ENCODE measurements at regions of chr4 and their contacts with region 1.

Region 1: DNA sequence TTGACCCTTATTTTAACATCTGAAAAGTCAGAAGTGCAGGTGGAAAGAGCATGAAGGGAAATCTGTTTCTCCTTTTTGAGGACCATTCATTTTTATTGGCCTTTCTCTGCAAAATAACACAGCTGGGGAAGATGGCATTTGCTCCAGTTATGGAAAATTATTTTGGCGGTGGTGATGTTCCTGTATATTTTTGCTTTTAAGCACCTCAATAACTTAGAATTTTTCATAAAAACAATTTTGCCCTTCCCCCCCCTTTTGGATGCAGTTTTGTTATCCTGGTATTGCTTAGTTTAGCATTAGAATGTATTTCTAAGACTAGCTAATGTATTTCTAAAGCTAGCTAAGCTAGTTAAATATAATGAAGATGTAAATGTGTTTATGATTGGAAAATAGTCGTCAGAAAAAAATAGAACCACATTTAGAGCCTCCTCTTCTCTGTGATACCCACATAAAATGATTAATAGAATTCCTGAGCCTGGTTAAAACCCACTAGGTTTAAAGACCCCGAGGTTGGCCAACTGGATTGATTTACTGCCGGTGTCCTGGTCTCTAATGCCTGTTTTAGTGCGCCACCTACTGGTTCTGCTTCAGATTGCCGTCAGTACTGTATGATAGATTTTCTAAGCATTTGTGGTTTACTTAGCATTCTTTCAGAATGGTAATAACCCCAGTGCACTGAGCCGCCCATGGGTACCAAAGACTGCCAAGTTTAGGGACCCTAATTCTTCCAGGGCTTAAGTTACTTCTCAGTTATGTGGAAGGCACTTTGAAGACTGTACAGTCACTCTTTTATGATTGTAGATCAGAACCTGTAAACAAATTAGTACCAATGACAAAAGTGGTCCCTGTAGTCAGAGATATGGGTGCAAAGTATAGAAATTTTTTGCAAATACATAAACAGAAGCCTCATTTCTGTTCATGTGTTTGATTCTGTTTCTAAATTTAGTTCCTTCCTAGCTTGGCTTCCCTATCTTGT is 11.4 kb downstream of the KLF3 start:
- DNase-seq: peak in 1 of 2 donors; percentile 85
- ATAC-seq: peak in 7 of 8 donors; percentile 29 to 64 (median 49)
- H3K4me3 ChIP-seq: peak overlapping the region in 2 of 10 donors; percentile 16 to 21
- H3K27ac ChIP-seq: peak overlapping the region in 9 of 10 donors; percentile 78 to 100 (median 99)
- H3K4me1 ChIP-seq: peaks cover 27 to 93% (median 83%) of the 10 kb centered on the region in 9 donors
- H3K27me3 ChIP-seq: no peaks in the 10 kb centered on the region
- CTCF ChIP-seq: peak; percentile 83 to 96 (median 92)

Region 2: DNA sequence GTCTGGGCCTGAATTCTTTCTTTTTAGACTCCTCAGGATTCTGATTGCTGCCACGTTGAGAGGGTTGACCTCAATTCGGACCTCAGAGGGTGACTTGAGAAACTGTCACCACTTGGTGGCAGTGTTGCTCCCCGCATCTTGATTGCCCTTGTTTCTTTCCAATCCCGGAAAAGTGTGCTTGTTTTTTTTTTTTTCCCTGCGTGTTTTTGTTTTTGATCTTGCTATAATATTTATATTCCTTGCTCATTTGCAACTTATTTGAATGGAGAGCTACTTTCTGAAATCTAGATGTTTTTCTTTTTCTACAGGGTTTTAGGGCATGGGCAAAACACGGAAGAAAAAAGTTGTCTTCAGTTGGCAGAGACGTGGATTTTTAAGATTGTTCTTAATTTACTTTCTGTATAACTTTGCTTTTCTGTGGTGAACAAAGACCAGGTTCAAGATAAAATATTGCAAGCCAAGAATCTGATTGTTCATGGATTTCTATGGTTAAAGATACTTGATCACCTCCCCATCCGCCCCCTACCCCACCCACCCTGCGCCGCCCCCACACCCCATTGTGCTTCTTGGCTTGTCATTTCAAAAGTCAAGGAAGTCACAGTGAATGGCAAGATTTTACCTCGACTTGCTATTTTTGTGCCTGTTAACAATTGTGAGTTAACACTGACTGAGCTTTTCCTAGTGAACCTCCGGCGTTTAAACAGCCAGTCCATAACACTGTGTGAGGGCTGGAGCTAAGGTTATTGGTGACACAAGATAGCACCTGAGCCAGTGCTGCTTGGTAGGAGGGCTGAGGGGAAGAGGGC is 613.1 kb before region 1 on chr4:
- intact Hi-C with region 1: loop called in 8 of 10 experiments (anchors 2 to 10 kb)
- DNase-seq: peak; percentile 74 to 87
- ATAC-seq: peak; percentile 52 to 89 (median 79)
- H3K4me3 ChIP-seq: peak overlapping the region in 8 of 10 donors; percentile 21 to 54 (median 42)
- H3K27ac ChIP-seq: peak overlapping the region in 9 of 10 donors; percentile 18 to 81 (median 75)
- H3K4me1 ChIP-seq: peaks cover 0 to 46% (median 26%) of the 10 kb centered on the region in 9 donors
- H3K27me3 ChIP-seq: no peaks in the 10 kb centered on the region
- CTCF ChIP-seq: peak; percentile 74 to 95 (median 87)

Region 3: GRCh38 chr4:38179690-38180377 is 495.6 kb before region 1 on chr4:
- intact Hi-C with region 1: loop called (anchors 1 to 5 kb)
- DNase-seq: peak; percentile 49 to 71
- ATAC-seq: peak; percentile 32 to 76 (median 61)
- H3K4me3 ChIP-seq: no peak overlapping the region
- H3K27ac ChIP-seq: peak overlapping the region in 1 of 10 donors; percentile 1
- H3K4me1 ChIP-seq: peaks cover 2 to 53% (median 21%) of the 10 kb centered on the region in 9 donors
- H3K27me3 ChIP-seq: no peaks in the 10 kb centered on the region
- CTCF ChIP-seq: peak; percentile 89 to 97 (median 94)

Region 4: GRCh38 chr4:38366456-38366855 is 309.0 kb before region 1 on chr4:
- intact Hi-C with region 1: loop called in 1 of 10 experiments (anchors 5 kb)
- DNase-seq: peak; percentile 18 to 19
- ATAC-seq: peak; percentile 64 to 89 (median 80)
- H3K4me3 ChIP-seq: no peak overlapping the region
- H3K27ac ChIP-seq: peak overlapping the region in 6 of 10 donors; percentile 2 to 37 (median 12)
- H3K4me1 ChIP-seq: peaks cover 0 to 23% (median 12%) of the 10 kb centered on the region in 9 donors
- H3K27me3 ChIP-seq: no peaks in the 10 kb centered on the region
- CTCF ChIP-seq: no peak

Region 5: DNA sequence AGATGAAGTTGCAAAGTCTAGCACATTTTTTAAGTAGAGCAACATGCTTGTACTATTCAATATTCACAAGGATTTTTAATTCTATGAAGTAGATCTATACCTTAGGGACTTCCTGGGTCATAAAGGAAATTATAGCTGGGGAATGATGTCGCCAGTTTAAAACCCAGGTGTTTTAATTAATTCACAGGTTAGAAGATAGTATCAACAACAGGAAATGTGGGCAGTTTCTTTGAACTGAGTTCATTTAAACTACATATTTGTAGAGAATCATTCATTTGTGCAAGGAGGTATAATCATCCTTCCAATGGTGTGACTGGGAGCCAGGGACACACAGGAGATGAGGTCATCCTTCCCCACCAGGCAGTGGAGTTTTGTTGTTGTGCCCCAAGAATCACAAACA is 192.7 kb before region 1 on chr4:
- intact Hi-C with region 1: no loop called
- DNase-seq: no peak
- ATAC-seq: no peak
- H3K4me3 ChIP-seq: no peak overlapping the region
- H3K27ac ChIP-seq: no peak overlapping the region
- H3K4me1 ChIP-seq: no peaks in the 10 kb centered on the region
- H3K27me3 ChIP-seq: no peaks in the 10 kb centered on the region
- CTCF ChIP-seq: no peak

Region 6: DNA sequence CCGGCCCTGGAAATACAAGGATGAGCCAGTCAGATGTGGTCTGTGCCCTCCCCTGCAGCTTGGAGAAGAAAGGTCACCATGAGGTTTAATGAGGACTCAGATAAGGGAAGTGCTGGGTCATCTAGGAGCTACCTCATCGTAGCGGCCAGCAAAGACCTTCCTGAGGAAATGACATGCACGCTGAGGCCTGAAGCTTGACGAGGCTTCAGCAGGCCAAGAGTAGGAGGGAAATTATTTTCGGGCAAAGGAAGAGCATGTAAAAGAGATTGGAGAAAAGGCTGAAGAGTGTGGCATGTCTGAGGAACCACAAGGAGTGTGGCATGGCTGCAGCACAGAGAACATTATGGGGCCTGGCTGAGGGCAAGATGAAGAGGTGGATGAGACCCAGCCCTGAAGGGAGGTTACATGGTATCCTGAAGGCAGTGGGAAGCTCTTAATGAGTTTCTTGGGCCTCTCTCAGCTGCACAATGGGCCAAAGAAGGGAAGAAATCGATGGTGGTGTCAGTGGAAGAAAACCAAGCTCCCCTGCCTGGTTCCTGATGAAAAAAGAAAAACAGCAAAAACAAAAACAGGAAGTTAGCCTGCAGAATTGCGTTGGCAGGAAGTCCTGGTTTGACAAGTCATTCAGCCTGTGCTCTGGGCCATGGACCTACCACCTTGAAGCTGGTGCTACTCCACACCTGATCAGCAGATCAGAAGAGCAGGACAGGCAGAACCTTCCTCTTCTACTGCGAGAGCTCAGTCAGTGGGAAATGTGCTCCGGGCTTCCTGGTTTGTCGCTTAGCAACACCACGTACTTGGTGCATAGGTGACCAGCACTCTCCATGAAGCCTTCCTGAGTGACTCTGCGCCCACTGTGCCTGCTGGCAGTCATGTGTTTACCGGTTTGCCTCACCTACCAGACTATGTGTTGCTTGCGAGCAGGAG is 146.0 kb before region 1 on chr4:
- intact Hi-C with region 1: loop called in 1 of 10 experiments (anchors 10 kb)
- DNase-seq: peak in 1 of 2 donors; percentile 16
- ATAC-seq: peak; percentile 44 to 87 (median 74)
- H3K4me3 ChIP-seq: no peak overlapping the region
- H3K27ac ChIP-seq: peak overlapping the region in 7 of 10 donors; percentile 34 to 93 (median 59)
- H3K4me1 ChIP-seq: peaks cover 0 to 45% (median 10%) of the 10 kb centered on the region in 9 donors
- H3K27me3 ChIP-seq: no peaks in the 10 kb centered on the region
- CTCF ChIP-seq: no peak

Region 7: GRCh38 chr4:38730830-38731646 is 55.6 kb after region 1 on chr4:
- intact Hi-C with region 1: loop called in 3 of 10 experiments (anchors 5 kb)
- DNase-seq: peak; percentile 85 to 86
- ATAC-seq: peak; percentile 81 to 93 (median 88)
- H3K4me3 ChIP-seq: no peak overlapping the region
- H3K27ac ChIP-seq: no peak overlapping the region
- H3K4me1 ChIP-seq: peaks cover 0 to 18% (median 4%) of the 10 kb centered on the region in 9 donors
- H3K27me3 ChIP-seq: no peaks in the 10 kb centered on the region
- CTCF ChIP-seq: peak; percentile 91 to 99 (median 97)

Measured in heart right ventricle (tissue), 16 donors.